Activated T-helper 1 cell treated with anti-CD3 and anti-CD28 coated beads, Interleukin-12 subunit alpha, Interleukin-12 subunit beta, Interleukin-2, Interleukin-4 antibody, amounts not matched to agents 30 ng/mL and 10 ng/mL and 1 ng/mL, durations not matched to agents 14 hours and 24 hours and 36 hours (primary cell): ENCODE measurements at regions of chr5 and their contacts with region 1.

Region 1: DNA sequence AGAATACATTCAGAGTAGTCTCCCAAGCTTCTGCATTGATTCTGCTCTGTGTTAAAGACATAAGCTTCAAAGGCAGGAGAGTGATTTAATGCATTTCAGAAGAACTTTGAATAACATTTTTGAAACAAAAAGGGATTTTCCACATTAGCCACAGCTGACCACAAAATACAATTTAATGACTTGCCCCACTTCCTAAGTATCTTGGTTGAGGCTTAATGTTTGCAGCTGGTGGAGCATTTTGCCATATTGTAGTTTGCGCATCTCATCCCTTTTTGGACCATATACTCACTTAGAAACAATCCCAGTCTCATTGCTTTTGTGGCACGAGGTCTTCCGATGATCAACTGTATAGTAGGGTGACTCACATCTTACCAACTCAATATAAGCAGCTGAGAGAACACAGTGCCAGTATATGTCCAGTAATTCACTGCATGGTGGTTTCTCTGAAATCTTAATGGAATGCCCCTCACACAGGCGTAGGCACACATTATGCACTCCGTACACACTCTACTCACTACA is 455.8 kb upstream of the PTGER4 start:
- DNase-seq: peak; percentile 39
- H3K4me3 Mint-ChIP-seq: peak overlapping the region; percentile 66
- H3K27ac Mint-ChIP-seq: peak overlapping the region; percentile 91
- H3K4me1 Mint-ChIP-seq: peaks cover 70% of the 10 kb centered on the region
- H3K27me3 Mint-ChIP-seq: no peaks in the 10 kb centered on the region

Region 2: GRCh38 chr5:39164529-39165402 is 1059.2 kb before region 1 on chr5:
- intact Hi-C with region 1: loop called (anchors 10 kb)
- DNase-seq: no peak
- H3K4me3 Mint-ChIP-seq: peak overlapping the region; percentile 72
- H3K27ac Mint-ChIP-seq: peak overlapping the region; percentile 96
- H3K4me1 Mint-ChIP-seq: peaks cover 85% of the 10 kb centered on the region
- H3K27me3 Mint-ChIP-seq: no peaks in the 10 kb centered on the region

Region 3: DNA sequence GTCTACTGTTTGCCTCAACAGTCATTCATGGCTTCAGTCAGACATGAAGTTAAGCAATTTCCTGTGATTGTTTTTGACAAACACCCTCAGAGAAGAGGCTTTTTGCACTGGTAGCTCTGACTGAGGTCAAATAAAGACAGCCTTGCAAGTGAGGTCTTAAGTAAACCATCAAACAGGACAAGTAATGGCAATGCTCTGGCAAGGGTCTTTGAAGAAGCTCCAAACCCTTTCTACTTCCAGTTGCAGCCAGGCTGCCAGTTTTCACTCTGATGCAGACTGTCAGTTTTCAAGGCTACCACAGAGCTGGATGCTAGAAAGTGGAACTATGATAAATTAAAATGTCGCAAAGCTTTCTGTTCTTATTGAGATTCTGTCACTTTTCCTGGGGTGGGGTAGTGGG is 34.3 kb after region 1 on chr5:
- intact Hi-C with region 1: loop called (anchors 1 kb)
- DNase-seq: no peak
- H3K4me3 Mint-ChIP-seq: peak overlapping the region; percentile 38
- H3K27ac Mint-ChIP-seq: peak overlapping the region; percentile 83
- H3K4me1 Mint-ChIP-seq: peaks cover 21% of the 10 kb centered on the region
- H3K27me3 Mint-ChIP-seq: peaks cover 3% of the 10 kb centered on the region

Region 4: GRCh38 chr5:40386289-40386688 is 162.3 kb after region 1 on chr5:
- intact Hi-C with region 1: loop called (anchors 1 kb)
- DNase-seq: peak; percentile 19
- H3K4me3 Mint-ChIP-seq: no peak overlapping the region
- H3K27ac Mint-ChIP-seq: peak overlapping the region; percentile 19
- H3K4me1 Mint-ChIP-seq: peaks cover 88% of the 10 kb centered on the region
- H3K27me3 Mint-ChIP-seq: no peaks in the 10 kb centered on the region

Region 5: GRCh38 chr5:40486437-40487275 is 262.7 kb after region 1 on chr5:
- intact Hi-C with region 1: loop called (anchors 1 kb)
- DNase-seq: peak; percentile 63
- H3K4me3 Mint-ChIP-seq: peak overlapping the region; percentile 23
- H3K27ac Mint-ChIP-seq: peak overlapping the region; percentile 83
- H3K4me1 Mint-ChIP-seq: peaks cover 79% of the 10 kb centered on the region
- H3K27me3 Mint-ChIP-seq: no peaks in the 10 kb centered on the region

Region 6: DNA sequence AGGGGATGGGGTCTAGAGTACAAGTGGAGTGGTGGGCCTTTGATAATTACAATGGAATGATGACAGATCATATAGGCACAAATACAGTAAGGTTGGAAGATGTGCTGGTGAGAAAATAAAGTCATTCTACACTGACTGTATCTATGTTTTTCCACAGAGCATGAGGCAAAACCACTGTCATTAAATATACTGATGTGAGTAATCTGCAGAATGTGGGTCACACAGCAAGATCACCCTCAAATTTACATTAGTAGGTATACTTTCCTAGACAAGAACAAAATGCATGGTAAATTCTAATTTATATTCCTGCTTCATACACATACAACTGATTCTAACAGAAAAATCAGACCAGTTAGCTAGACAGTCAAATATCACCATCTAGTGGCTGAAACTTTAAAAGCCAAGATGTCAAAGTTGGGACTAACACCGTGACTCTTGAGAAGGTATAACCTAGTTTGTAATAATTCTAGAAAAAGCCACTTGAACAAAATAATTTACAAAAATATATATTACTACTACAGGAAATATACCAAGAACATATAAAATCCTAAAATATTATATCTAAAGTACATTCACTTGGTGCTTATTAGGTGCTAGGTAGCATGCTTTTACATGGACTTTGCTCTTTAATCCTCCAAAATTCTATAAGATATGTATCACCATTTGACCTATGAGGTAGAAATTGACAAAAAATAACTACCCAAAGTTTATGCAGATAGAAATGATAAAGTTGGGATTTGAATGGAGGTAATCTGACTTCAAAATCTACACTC is 512.3 kb after region 1 on chr5:
- intact Hi-C with region 1: loop called (anchors 1 kb)
- DNase-seq: no peak
- H3K4me3 Mint-ChIP-seq: no peak overlapping the region
- H3K27ac Mint-ChIP-seq: no peak overlapping the region
- H3K4me1 Mint-ChIP-seq: peaks cover 22% of the 10 kb centered on the region
- H3K27me3 Mint-ChIP-seq: no peaks in the 10 kb centered on the region